ACHN (cell line): ENCODE measurements at regions of chr3 and their contacts with region 1.

Region 1: DNA sequence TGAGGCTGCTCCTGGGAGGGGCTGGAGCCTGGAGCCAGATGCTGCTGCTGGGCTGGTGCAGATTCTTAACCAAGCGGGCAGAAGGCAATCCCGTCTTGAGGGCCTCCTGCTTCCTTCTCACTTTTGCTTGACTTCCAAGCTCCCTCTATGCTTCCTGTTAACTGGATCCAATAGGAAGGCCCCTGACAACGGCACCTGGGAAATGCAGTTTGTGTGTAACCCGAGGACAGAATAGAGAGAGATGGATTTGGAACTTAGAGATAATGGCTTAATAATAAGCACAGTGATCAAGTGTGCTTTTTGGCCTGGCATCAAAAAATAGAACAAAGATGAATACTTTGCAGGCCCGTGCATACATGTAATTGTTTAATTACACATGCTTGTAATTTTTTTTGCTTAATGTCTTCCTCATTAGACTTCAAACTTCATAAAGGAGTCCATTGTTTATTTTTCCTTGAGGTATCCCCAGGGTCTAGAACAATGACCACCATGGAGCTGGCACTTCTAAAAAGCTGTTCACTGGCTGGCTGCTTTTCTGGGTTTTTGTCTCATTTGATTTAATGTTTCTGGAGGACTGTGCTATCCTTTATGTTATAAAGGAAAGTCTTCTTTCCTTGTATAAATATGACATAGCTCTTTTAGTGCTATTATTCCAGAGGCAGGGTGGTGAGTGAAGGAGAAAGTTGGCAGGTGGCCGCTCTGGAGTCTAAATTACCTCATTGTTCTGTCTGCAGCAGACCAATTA is 63.3 kb upstream of the MITF start:
- DNase-seq: no peak

Region 2: GRCh38 chr3:69451594-69451993 is 224.4 kb before region 1 on chr3:
- in situ Hi-C with region 1: no loop called
- DNase-seq: no peak

Region 3: GRCh38 chr3:69791919-69792399 is 116.0 kb after region 1 on chr3:
- in situ Hi-C with region 1: loop called (anchors 25 kb)
- DNase-seq: peak; percentile 48

Region 4: GRCh38 chr3:69906351-69906966 is 230.5 kb after region 1 on chr3:
- in situ Hi-C with region 1: no loop called
- DNase-seq: peak; percentile 56